Common myeloid progenitor, CD34-positive (primary cell): ENCODE measurements at regions of chr16 and their contacts with region 1.

Region 1: DNA sequence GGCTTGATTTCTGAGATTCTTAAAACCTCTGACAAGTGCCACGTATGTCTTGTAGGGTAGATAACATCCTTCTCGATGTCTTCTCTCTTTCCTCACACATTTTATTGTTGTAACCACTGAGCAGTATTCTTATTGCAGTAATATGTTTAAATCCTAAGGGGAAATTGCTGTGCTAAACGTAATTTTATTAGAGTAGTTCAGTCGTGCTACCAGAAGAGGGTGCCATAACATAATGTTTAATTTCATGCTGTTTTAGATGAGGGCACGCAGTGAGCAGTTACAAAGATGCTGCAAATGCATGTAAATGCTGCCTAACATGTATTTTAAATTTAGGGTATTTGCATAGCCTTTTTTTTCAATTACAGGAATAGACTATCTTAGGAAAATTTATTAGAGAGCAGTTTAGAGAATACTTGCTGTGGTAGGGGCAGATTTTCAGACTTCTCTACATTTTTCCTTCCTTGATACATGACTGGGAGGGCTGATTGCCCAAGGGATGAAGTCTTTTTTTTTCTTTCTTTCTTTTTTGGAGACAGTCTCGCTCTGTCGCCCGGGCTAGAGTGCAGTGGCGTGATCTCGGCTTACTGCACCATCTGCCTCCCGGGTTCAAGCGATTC is 51.7 kb downstream of the GAN start:
- DNase-seq: peak; percentile 55 to 82 (median 72)
- H3K4me3 ChIP-seq: no peak overlapping the region
- H3K27ac ChIP-seq: no peak overlapping the region
- H3K4me1 ChIP-seq: no peaks in the 10 kb centered on the region
- H3K27me3 ChIP-seq: no peaks in the 10 kb centered on the region

Region 2: DNA sequence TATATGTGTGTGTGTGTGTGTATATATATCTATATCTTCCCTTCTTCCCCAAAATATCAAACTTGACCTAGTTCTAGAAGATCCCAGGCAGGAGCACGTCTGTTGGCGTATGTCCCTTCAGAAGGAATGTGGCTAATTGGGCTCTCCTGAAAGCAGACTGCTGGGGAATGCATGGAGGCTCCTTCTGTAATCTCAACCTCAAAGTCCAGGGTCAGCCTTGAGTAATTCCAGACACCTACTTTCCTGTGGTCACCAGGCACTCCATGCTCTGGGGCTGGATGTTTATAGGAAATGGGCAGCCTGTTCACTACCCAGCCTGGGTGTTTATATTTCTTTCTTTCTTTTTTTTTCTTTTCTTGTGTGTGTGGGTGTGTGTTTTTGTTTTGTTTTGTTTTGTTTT is 114.6 kb before region 1 on chr16:
- CTCF ChIA-PET with region 1: no interaction called
- POLR2A ChIA-PET with region 1: no interaction called
- DNase-seq: no peak
- H3K4me3 ChIP-seq: no peak overlapping the region
- H3K27ac ChIP-seq: no peak overlapping the region
- H3K4me1 ChIP-seq: no peaks in the 10 kb centered on the region
- H3K27me3 ChIP-seq: peaks cover 0 to 2% (median 0%) of the 10 kb centered on the region in 5 experiments

Region 3: DNA sequence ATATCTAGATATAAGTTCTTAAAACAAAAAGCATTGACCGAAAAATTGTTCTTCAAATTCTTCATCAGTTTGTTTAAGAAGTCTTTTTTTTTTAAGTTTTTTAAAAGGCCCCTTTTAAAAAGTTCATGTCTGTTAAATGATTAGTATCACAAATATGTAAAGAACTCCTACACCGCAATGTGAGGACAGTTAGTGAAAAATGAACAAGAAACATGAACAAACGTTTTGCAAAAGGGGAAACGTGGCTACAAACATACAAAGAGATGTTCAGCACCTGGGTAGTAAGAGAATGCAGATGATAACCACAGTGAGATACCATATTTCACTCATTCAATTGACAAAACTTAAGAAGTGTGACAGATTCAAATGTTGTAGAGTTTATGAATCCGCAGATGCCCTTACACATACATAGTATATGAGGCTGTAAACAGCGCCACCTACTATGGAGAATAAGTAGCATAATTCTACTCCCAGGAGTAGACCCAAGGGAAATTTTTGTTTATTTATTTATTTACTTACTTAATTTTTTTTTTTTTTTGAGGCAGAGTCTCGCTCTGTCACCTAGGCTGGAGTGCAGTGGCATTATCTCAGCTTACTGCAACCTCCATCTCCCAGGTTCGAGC is 16.3 kb before region 1 on chr16:
- CTCF ChIA-PET with region 1: interaction called, 11 read pairs
- POLR2A ChIA-PET with region 1: no interaction called
- DNase-seq: peak in 2 of 3 donors; percentile 9 to 17
- H3K4me3 ChIP-seq: no peak overlapping the region
- H3K27ac ChIP-seq: no peak overlapping the region
- H3K4me1 ChIP-seq: no peaks in the 10 kb centered on the region
- H3K27me3 ChIP-seq: no peaks in the 10 kb centered on the region

Region 4: DNA sequence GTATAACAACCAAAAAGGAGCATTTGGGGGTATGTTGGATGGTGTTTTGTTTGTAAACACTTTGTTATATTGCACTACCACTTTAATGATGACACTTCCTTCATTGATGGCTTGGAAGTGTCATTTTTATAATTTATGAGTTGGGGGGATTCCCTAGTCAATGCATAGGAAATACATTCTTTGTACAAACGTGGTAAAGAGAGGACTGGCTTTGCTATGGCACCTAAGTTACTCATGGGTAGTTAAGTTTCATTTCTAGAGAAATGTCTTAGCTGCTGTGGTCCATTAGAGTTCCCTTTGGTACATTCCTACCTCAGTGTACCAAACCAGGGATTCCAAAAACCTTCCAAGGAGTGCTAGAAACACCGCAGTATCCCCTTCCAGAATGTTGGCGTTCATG is 14.5 kb after region 1 on chr16:
- CTCF ChIA-PET with region 1: interaction called, 12 read pairs
- POLR2A ChIA-PET with region 1: no interaction called
- DNase-seq: no peak
- H3K4me3 ChIP-seq: no peak overlapping the region
- H3K27ac ChIP-seq: no peak overlapping the region
- H3K4me1 ChIP-seq: no peaks in the 10 kb centered on the region
- H3K27me3 ChIP-seq: no peaks in the 10 kb centered on the region

Region 5: DNA sequence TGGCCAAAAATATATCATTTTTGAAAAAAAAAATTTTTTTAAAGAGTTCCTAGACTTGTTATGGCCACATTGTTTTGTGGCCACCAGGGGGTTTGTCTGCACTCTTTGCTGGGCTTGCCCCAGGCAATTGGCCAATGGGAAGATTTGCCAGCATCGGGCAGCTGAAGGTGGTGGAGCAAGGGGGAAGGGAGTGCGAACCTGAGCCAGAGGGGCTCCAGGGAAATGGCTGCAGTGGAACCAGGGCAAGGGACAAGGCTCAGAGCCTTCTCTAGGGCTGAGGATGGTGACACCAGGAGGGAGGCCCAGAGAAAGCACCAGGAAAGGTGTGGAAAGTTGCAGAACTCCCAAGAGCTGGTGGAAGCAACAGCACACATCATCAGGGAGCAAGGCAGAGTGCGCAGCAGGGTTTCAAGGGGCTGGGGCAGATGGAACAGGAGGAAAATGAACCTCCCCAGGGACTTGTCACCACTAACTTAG is 62.7 kb after region 1 on chr16:
- CTCF ChIA-PET with region 1: no interaction called
- POLR2A ChIA-PET with region 1: no interaction called
- DNase-seq: peak; percentile 70 to 81 (median 77)
- H3K4me3 ChIP-seq: no peak overlapping the region
- H3K27ac ChIP-seq: no peak overlapping the region
- H3K4me1 ChIP-seq: peaks cover 2 to 32% (median 20%) of the 10 kb centered on the region in 4 experiments
- H3K27me3 ChIP-seq: no peaks in the 10 kb centered on the region

Region 6: DNA sequence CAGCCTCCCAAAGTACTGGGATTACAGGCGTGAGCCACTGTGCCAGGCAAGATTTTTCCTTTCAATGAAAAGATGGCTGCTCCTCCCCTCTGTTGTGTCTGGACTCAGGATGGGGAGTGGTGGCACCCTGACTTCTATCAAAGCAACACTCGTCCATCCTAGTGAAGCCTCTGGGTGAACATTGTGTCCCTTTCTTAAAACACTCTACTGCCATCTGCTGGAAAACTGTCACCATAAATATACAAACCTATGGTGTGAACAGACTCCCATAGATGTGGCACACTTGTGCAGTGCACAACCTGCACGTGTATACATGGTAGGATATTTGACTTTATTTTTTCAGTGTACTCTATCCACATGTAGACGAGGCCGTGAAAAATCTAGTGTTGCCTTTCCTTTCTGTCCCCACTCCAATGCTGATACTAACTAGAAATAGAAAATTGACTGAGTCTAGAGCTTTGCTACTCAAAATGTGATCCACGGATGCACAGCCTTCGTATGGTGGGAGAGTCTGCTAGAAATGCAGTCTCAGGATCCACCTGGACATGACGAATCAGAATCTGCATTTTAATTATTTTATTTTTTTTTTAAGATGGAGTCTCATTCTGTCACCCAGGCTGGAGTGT is 356.8 kb after region 1 on chr16:
- CTCF ChIA-PET with region 1: interaction called, 17 read pairs
- POLR2A ChIA-PET with region 1: no interaction called
- DNase-seq: peak; percentile 82 to 91 (median 90)
- H3K4me3 ChIP-seq: no peak overlapping the region
- H3K27ac ChIP-seq: no peak overlapping the region
- H3K4me1 ChIP-seq: peaks cover 2 to 9% (median 8%) of the 10 kb centered on the region in 4 experiments
- H3K27me3 ChIP-seq: no peaks in the 10 kb centered on the region

Region 7: DNA sequence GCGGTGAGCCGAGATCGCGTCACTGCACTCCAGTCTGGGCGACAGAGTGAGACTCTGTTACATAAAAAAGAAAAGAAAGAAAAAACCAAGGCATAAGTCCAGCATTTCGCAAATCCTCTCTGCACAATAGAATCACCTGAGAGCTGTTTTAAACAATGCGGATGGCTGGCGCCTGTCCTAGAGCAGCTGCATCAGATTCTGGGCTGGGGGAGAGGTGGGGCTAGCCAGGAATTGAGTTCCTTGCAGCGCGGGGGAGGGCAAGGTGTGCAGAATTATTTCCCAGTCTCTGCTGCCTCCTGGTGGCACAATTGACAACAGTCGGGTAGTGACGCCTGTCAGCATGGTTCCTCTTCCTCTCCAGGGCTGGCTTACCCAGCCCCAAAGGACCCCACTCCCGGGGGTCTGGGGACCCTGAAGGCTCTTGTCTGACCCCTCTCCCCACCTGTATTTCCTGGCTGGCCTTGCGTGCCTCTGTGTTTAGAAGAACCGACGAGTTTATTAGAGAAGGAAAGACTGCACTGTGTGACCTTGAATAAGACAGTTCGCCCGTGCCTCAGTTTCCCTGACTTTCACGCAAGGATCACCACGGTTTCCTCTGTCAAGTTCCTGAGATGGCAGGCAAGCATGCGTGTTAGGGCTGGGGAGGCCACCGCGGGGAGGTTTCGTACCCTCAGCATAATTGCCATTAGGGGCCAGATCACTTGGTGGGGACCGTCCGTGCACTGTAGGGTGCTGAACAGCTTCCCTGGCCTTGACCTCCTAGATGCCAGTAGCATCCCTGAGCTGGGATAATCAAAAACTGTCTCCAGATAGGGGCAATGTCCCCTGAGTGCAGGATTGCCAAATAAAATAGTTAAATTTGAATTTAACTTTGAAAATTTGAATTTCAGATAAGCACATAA is 371.7 kb after region 1 on chr16:
- CTCF ChIA-PET with region 1: interaction called, 13 read pairs
- POLR2A ChIA-PET with region 1: no interaction called
- DNase-seq: peak; percentile 82 to 89 (median 85)
- H3K4me3 ChIP-seq: peak overlapping the region in 6 of 7 experiments; percentile 10 to 74 (median 55)
- H3K27ac ChIP-seq: peak overlapping the region in 1 of 2 experiments; percentile 8
- H3K4me1 ChIP-seq: peaks cover 15 to 50% (median 37%) of the 10 kb centered on the region in 4 experiments
- H3K27me3 ChIP-seq: no peaks in the 10 kb centered on the region